ENCODE measurements at regions of chr14 and their contacts with region 1.

Region 1: GRCh38 chr14:92596331-92596911 is 82.8 kb downstream of the RIN3 start:
- H3K4me3 ChIP-seq: no peak overlapping the region
- H3K27ac ChIP-seq: no peak overlapping the region
- H3K4me1 ChIP-seq: no peaks in the 10 kb centered on the region
- CTCF ChIP-seq: no peak

Region 2: GRCh38 chr14:92513204-92513973 is 83.0 kb before region 1 on chr14 and contains the start of gene RIN3:
- CTCF ChIA-PET with region 1: no interaction called
- POLR2A ChIA-PET with region 1: no interaction called
- H3K4me3 ChIP-seq: peak within 1 kb of the TSS; percentile 60
- H3K27ac ChIP-seq: peak within 1 kb of the TSS; percentile 53; the same call in 1 of the 2 replicates
- H3K4me1 ChIP-seq: peaks cover 5% of the 10 kb centered on the region
- CTCF ChIP-seq: no peak

Region 3: GRCh38 chr14:92612988-92613658 is 16.7 kb after region 1 on chr14:
- CTCF ChIA-PET with region 1: interaction called, 10 read pairs
- POLR2A ChIA-PET with region 1: no interaction called
- H3K4me3 ChIP-seq: no peak overlapping the region
- H3K27ac ChIP-seq: no peak overlapping the region
- H3K4me1 ChIP-seq: no peaks in the 10 kb centered on the region
- CTCF ChIP-seq: peak; percentile 78

Region 4: GRCh38 chr14:92819011-92819597 is 222.7 kb after region 1 on chr14:
- CTCF ChIA-PET with region 1: no interaction called
- POLR2A ChIA-PET with region 1: no interaction called
- H3K4me3 ChIP-seq: no peak overlapping the region
- H3K27ac ChIP-seq: no peak overlapping the region
- H3K4me1 ChIP-seq: no peaks in the 10 kb centered on the region
- CTCF ChIP-seq: no peak

Measured in HEK293 (cell line).